ENCODE measurements at regions of chr14 and their contacts with region 1.

Region 1: GRCh38 chr14:62029569-62029924 is 267.3 kb downstream of the SNAPC1 start:
- DNase-seq: no peak
- ATAC-seq: no peak
- H3K4me3 Mint-ChIP-seq: no peak overlapping the region
- H3K27ac Mint-ChIP-seq: no peak overlapping the region
- H3K4me1 Mint-ChIP-seq: peaks cover 3% of the 10 kb centered on the region
- H3K27me3 Mint-ChIP-seq: peaks cover 30% of the 10 kb centered on the region

Region 2: GRCh38 chr14:62071039-62071438 is 41.5 kb after region 1 on chr14:
- CTCF ChIA-PET with region 1: interaction called, 3 read pairs
- POLR2A ChIA-PET with region 1: interaction called, 10 read pairs
- intact Hi-C with region 1: no loop called
- DNase-seq: no peak
- ATAC-seq: no peak
- H3K4me3 Mint-ChIP-seq: no peak overlapping the region
- H3K27ac Mint-ChIP-seq: no peak overlapping the region
- H3K4me1 Mint-ChIP-seq: no peaks in the 10 kb centered on the region
- H3K27me3 Mint-ChIP-seq: peaks cover 2% of the 10 kb centered on the region

Region 3: DNA sequence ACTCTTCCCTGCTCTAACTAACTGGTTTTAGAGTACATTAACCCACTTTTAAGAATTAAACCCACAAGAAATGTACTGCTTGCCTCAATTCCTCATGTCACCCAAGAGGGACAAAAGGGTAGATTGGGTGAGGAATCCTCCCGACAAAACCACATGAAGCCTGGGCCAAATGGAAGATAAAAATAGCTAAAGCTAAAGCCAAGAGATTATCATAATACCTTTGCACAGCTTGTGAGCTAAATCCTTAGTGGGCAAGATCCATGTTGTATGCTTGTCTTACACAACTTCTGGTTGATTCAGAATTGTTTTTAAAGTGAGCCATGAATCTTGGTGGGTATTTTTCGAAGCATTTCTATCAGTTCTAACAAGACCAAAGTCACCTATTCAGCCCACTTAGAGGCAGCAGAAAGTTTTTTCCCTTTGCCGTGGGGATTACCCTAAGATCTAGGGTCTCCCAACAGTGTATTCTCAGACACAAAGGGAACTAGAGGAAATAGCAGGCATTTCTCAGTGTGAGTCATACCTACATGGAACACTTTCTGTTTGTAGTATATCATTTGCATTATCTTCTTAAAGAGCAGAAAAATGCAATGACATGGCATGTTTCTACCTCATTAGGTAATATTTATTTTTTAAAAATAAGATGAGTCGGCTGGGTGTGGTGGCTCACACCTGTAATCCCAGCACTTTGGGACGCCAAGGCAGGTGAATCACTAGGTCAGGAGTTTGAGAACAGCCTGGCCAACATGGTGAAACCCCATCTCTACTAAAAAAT is 399.1 kb after region 1 on chr14:
- CTCF ChIA-PET with region 1: no interaction called
- POLR2A ChIA-PET with region 1: no interaction called
- intact Hi-C with region 1: no loop called
- DNase-seq: no peak
- ATAC-seq: no peak
- H3K4me3 Mint-ChIP-seq: no peak overlapping the region
- H3K27ac Mint-ChIP-seq: no peak overlapping the region
- H3K4me1 Mint-ChIP-seq: no peaks in the 10 kb centered on the region
- H3K27me3 Mint-ChIP-seq: no peaks in the 10 kb centered on the region

Measured in activated CD4-positive, alpha-beta T cell treated with anti-CD3 and anti-CD28 coated beads for 36 hours (primary cell).